ENCODE measurements at regions of chr19 and their contacts with region 1.

Region 1: GRCh38 chr19:48190288-48190884 is 19.9 kb downstream of the ZSWIM9 start:
- DNase-seq: no peak
- H3K4me3 ChIP-seq: no peak overlapping the region
- H3K27me3 ChIP-seq: no peaks in the 10 kb centered on the region
- CTCF ChIP-seq: no peak

Region 2: GRCh38 chr19:48095612-48096175 is 94.7 kb before region 1 on chr19:
- CTCF ChIA-PET with region 1: no interaction called
- POLR2A ChIA-PET with region 1: no interaction called
- DNase-seq: no peak
- H3K4me3 ChIP-seq: no peak overlapping the region
- H3K27me3 ChIP-seq: no peaks in the 10 kb centered on the region
- CTCF ChIP-seq: no peak

Region 3: GRCh38 chr19:48203732-48204628 is 13.6 kb after region 1 on chr19:
- CTCF ChIA-PET with region 1: interaction called, 13 read pairs
- POLR2A ChIA-PET with region 1: no interaction called
- DNase-seq: peak; percentile 80
- H3K4me3 ChIP-seq: peak overlapping the region; percentile 61
- H3K27me3 ChIP-seq: no peaks in the 10 kb centered on the region
- CTCF ChIP-seq: no peak

Measured in BJ (cell line).